ENCODE measurements at regions of chr12 and their contacts with region 1.

Region 1: DNA sequence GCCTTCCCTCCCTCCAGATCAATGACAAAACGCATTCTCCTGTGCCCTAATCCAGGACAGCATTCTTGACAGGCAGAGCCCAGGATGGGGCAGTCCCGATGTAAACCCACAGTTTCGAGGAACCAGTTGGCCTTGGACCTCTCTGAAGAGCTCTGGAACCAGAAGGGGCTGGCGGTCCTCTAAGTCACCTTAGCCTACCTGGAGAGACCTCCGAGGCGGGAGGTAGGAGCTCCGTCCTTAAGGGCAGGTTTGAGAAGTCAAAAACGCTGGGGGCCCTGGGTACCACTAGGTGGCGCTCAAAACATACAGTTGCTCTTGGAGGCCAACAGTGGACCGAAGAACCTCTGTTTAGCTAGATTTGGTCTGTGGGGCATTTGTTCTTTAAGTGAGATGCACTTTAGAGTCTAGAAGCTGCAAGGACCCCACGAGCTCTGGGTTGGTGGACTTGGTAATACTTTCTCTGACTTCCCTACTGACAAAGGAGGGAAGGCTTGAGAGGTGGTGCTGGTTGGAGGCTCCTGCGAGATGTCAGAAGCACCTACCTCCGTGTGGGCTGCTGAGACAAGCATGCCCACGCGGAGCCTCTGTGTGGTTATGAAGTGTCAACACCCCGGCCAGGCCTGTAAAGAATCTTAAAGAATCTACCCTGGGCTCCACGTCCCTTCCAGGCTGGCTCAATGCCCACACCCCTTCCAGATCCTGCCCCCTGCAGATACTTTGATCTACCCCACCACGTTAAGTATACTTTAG is 74.8 kb upstream of the CHST11 start:
- DNase-seq: peak; percentile 74
- ATAC-seq: peak; percentile 96
- H3K4me3 ChIP-seq: no peak overlapping the region
- H3K27ac ChIP-seq: no peak overlapping the region
- H3K4me1 ChIP-seq: peaks cover 0 to 22% of the 10 kb centered on the region in 2 experiments; a peak in 2 of 4 replicates
- H3K27me3 ChIP-seq: no peaks in the 10 kb centered on the region
- CTCF ChIP-seq: peak; percentile 89 to 97 (median 97); a peak in 5 of 6 replicates
- POLR2A ChIP-seq: no peak
- RAD21 ChIP-seq: peak; percentile 99

Region 2: DNA sequence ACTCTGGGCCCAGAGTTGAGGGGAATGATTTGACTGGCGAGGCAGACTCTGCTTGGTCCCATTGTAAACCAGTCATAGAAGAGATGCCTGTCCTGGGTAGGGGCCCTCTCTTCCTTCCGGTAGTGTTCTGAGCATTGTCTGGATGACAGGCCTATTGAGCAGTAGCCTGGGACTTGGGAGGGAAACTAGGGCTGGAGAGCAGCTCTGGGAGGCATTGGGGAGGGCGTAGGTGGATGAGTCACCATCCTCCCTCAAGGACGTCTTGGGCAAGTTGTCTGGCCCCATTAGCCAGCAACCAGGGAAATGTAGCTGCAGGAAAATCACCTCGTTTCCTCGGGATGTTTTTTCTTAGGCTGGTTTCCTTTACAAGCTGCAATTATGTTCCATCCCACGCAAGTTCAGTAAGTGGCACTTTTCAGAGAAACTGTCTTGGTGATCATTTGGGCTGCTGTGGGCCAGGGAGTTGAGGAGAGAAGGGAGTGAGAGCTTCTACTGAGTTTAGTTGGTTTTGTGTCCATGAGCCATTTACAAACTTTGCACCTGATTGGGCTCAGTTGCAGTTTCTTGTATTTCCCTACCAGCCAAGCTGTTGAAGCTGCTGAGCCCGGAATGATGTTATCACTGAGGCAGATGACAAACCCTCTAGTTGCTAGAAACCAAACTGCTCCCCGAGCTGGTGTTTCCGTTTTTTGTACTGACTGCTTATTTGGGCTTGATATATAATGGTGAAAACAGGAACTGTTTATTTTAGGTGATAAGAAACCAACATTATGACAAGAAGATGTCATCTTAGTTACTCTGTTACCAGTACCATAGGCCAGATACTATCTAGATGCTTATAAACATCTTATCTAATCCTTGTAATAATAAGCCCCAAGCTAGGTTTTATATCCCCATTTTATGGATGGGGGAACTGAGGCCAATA is 222.4 kb after region 1 on chr12:
- CTCF ChIA-PET with region 1: interaction called, 3 read pairs
- POLR2A ChIA-PET with region 1: no interaction called
- RAD21 ChIA-PET with region 1: interaction called in 1 of 2 experiments, 3 read pairs
- intact Hi-C with region 1: loop called (anchors 10 kb)
- DNase-seq: peak; percentile 89
- ATAC-seq: peak; percentile 80
- H3K4me3 ChIP-seq: peak overlapping the region; percentile 20 to 49
- H3K27ac ChIP-seq: peak overlapping the region; percentile 78
- H3K4me1 ChIP-seq: peaks cover 41 to 66% of the 10 kb centered on the region in 2 experiments
- H3K27me3 ChIP-seq: no peaks in the 10 kb centered on the region
- CTCF ChIP-seq: no peak
- POLR2A ChIP-seq: no peak
- RAD21 ChIP-seq: no peak

Region 3: GRCh38 chr12:104671407-104672098 is 289.6 kb after region 1 on chr12:
- CTCF ChIA-PET with region 1: interaction called, 11 read pairs
- POLR2A ChIA-PET with region 1: no interaction called
- RAD21 ChIA-PET with region 1: no interaction called
- intact Hi-C with region 1: loop called (anchors 5 kb)
- DNase-seq: peak; percentile 93
- ATAC-seq: peak; percentile 74
- H3K4me3 ChIP-seq: peak overlapping the region; percentile 18 to 47
- H3K27ac ChIP-seq: peak overlapping the region; percentile 74
- H3K4me1 ChIP-seq: peaks cover 37 to 48% of the 10 kb centered on the region in 2 experiments
- H3K27me3 ChIP-seq: no peaks in the 10 kb centered on the region
- CTCF ChIP-seq: no peak
- POLR2A ChIP-seq: no peak
- RAD21 ChIP-seq: peak; percentile 38; the same call in 1 of the 2 replicates

Region 4: DNA sequence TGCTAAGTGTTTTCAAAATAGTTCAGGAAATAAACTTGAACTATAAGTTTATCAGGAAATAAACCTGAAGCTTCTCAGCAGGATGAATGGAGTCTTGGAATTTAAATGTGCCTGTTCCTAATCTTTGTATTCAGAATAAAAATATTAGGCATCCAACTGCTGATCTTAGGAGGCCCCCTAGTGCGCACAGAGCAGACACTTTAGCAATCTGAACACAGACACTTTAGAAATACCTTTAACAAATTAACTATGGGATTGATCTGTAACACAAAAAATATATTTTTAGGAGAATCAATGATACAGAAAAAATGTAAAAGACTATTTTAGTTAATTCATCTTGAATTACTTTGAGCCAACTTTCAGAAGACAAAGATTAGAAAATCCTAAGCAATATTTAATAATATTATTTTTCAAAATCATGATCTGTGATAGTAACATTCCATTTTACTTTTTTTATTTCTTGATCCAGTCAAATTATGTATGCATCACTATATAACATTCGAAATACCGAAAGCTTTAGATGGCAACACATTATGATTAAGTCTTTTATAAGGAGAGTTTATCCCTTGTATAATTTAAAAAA is 495.3 kb after region 1 on chr12:
- CTCF ChIA-PET with region 1: interaction called, 10 read pairs
- POLR2A ChIA-PET with region 1: no interaction called
- RAD21 ChIA-PET with region 1: interaction called in 1 of 2 experiments, 5 read pairs
- intact Hi-C with region 1: loop called (anchors 2 kb)
- DNase-seq: no peak
- ATAC-seq: peak; percentile 75
- H3K4me3 ChIP-seq: no peak overlapping the region
- H3K27ac ChIP-seq: no peak overlapping the region
- H3K4me1 ChIP-seq: no peaks in the 10 kb centered on the region
- H3K27me3 ChIP-seq: no peaks in the 10 kb centered on the region
- CTCF ChIP-seq: peak; percentile 51 to 79 (median 65)
- POLR2A ChIP-seq: no peak
- RAD21 ChIP-seq: peak; percentile 92

Region 5: GRCh38 chr12:105053116-105053572 is 671.2 kb after region 1 on chr12:
- CTCF ChIA-PET with region 1: interaction called, 11 read pairs
- POLR2A ChIA-PET with region 1: no interaction called
- RAD21 ChIA-PET with region 1: interaction called, 3 read pairs
- intact Hi-C with region 1: loop called (anchors 1 kb)
- DNase-seq: peak; percentile 67
- ATAC-seq: peak; percentile 84
- H3K4me3 ChIP-seq: no peak overlapping the region
- H3K27ac ChIP-seq: no peak overlapping the region
- H3K4me1 ChIP-seq: no peaks in the 10 kb centered on the region
- H3K27me3 ChIP-seq: no peaks in the 10 kb centered on the region
- CTCF ChIP-seq: peak; percentile 85 to 97 (median 86)
- POLR2A ChIP-seq: no peak
- RAD21 ChIP-seq: peak; percentile 97

Region 6: GRCh38 chr12:105382771-105383622 is 1001.1 kb after region 1 on chr12:
- CTCF ChIA-PET with region 1: no interaction called
- POLR2A ChIA-PET with region 1: no interaction called
- RAD21 ChIA-PET with region 1: no interaction called
- intact Hi-C with region 1: loop called (anchors 10 kb)
- DNase-seq: peak; percentile 41
- ATAC-seq: peak; percentile 83
- H3K4me3 ChIP-seq: no peak overlapping the region
- H3K27ac ChIP-seq: no peak overlapping the region
- H3K4me1 ChIP-seq: no peaks in the 10 kb centered on the region
- H3K27me3 ChIP-seq: no peaks in the 10 kb centered on the region
- CTCF ChIP-seq: peak; percentile 70 to 85 (median 80)
- POLR2A ChIP-seq: no peak
- RAD21 ChIP-seq: peak; percentile 94